ENCODE measurements at regions of chr20 and their contacts with region 1.

Region 1: GRCh38 chr20:38997622-38998021 is 35.5 kb downstream of the DHX35 start:
- DNase-seq: peak; percentile 39
- H3K4me3 Mint-ChIP-seq: peak overlapping the region; percentile 38
- H3K27ac Mint-ChIP-seq: peak overlapping the region; percentile 63
- H3K4me1 Mint-ChIP-seq: peaks cover 28% of the 10 kb centered on the region
- H3K27me3 Mint-ChIP-seq: no peaks in the 10 kb centered on the region

Region 2: GRCh38 chr20:38893565-38894090 is 104.0 kb before region 1 on chr20:
- intact Hi-C with region 1: no loop called
- DNase-seq: peak; percentile 72
- H3K4me3 Mint-ChIP-seq: no peak overlapping the region
- H3K27ac Mint-ChIP-seq: peak overlapping the region; percentile 62
- H3K4me1 Mint-ChIP-seq: peaks cover 45% of the 10 kb centered on the region
- H3K27me3 Mint-ChIP-seq: no peaks in the 10 kb centered on the region

Region 3: DNA sequence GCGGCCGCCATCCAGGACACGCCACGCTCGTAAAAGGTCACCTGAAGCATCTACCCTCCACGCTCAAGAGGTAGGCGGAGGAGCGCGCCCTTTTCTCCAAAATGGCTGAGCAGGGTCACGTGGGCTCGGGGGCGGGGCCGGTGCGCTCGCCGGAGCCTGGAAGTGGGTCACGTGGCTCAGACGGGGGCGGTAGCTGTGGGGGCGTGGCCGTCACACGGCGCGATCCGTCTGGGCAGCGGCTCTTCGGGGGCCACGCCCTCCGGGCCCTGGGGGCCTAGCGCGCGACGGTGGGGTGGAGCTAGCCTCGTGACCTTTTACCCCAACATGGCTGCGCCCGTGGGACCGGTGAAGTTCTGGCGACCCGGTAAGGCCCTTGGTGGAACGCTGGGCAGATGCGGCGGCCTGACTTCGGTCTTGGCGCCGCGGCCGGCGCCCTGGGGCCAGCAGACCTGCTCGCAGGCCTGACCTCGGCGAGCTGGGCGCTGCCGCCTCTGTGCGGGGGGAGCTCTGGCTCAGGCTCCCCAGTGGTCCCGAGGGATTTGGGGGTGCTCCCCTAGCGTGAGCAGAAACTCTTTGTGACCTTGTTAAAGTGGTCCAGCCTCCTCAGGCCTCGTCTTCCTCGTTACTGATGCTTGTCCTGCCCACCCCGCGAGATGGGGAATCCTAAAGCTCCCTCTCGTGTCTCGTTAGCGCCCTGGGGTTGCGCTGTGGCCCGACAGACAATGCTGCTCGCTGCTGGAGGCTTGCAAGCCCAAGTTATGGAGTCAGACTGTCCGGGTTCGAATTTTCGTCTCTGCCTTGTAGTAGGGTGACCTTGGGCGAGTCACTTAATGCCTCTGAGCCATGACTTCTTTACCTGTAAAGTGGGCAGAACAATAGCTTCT is 35.3 kb before region 1 on chr20 and contains the start of gene DHX35:
- intact Hi-C with region 1: loop called (anchors 1 kb)
- DNase-seq: peak; percentile 99
- H3K4me3 Mint-ChIP-seq: peak within 1 kb of the TSS; percentile 97
- H3K27ac Mint-ChIP-seq: peak within 1 kb of the TSS; percentile 95
- H3K4me1 Mint-ChIP-seq: peaks cover 34% of the 10 kb centered on the region
- H3K27me3 Mint-ChIP-seq: no peaks in the 10 kb centered on the region
- total RNA-seq, gene DHX35: 14.8 and 15.3 TPM in 2 replicates

Region 4: DNA sequence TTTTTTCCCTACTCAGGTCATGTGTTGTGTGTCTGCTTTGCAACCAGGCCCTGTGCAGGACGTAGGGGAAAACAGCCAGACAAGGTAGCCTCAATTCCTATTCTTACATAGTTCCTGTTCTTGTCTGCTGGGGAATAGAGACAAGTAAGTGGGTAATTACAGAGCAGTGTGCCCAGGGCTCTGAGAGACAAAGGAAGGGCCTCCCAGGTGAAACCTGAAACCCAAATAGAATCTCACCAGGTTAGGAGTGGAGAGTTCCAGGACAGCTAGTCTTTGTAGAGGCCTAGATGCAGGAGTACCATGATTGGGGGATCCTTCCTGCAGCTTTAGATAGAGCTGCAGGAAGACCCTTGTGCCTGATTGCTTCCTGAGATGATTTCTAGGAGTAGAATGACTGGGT is 12.9 kb after region 1 on chr20:
- intact Hi-C with region 1: no loop called
- DNase-seq: no peak
- H3K4me3 Mint-ChIP-seq: no peak overlapping the region
- H3K27ac Mint-ChIP-seq: no peak overlapping the region
- H3K4me1 Mint-ChIP-seq: peaks cover 9% of the 10 kb centered on the region
- H3K27me3 Mint-ChIP-seq: no peaks in the 10 kb centered on the region